ENCODE measurements at regions of chr3 and their contacts with region 1.

Region 1: DNA sequence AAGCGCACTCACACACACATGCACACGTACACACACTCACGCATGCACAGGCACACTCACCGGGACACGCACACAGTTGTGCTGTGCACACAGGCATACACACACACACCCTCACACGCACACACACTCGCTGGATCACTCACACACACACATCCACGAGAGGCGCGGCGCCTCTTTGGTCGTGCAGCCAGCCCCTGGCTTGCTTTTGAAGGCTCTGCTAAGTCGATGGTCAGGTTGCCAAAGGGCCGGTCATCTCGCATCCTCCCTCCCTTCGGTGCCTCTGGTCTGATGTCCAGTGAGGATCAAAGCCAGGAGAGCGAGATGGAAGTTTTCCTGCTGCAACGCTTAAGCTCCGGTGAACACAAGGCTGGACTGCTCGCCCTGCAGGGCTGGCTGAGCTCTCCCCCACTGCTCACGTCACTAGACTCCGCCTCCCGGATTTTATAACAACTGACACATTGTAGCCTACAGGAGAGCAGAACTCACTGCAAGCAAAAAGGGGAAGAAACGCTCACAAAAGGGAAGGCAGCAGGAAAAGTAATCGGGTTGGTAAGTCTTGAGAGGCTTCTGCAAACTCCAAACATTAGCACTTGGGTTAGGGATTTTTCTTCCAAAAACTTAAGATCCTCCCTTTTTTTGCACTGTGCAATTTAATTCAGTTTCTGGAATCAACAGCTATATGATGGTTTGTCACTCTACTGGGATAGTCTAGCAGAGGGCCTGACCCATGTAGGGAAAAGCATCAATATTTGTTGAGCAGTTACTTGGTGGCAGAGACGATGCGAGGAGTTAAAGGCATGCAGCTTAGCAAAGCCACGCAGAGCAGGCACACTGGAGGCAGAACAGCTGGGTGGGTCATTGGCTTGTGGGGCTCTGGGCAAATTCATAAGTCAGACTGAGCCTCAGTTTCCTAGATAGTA is at the start of gene SRGAP3:
- DNase-seq: peak; percentile 63 to 96 (median 92)
- H3K4me3 ChIP-seq: peak within 1 kb of the TSS; percentile 48 to 91 (median 77)
- H3K27ac ChIP-seq: peak within 1 kb of the TSS; percentile 15 to 92 (median 81)
- H3K27me3 ChIP-seq: no peaks in the 10 kb centered on the region
- CTCF ChIP-seq: peak in 49 of 56 donors; percentile 20 to 66 (median 47)
- total RNA-seq, gene SRGAP3: 93.9 to 187 (median 139) TPM

Region 2: GRCh38 chr3:8987645-8988383 is 261.7 kb before region 1 on chr3:
- intact Hi-C with region 1: loop called in 1 of 2 experiments (anchors 5 kb)
- DNase-seq: peak in 9 of 10 donors; percentile 61 to 83 (median 74)
- H3K4me3 ChIP-seq: no peak overlapping the region
- H3K27ac ChIP-seq: peak overlapping the region in 13 of 59 donors; percentile 6 to 69 (median 31)
- H3K27me3 ChIP-seq: no peaks in the 10 kb centered on the region
- CTCF ChIP-seq: peak; percentile 47 to 91 (median 83)

Region 3: DNA sequence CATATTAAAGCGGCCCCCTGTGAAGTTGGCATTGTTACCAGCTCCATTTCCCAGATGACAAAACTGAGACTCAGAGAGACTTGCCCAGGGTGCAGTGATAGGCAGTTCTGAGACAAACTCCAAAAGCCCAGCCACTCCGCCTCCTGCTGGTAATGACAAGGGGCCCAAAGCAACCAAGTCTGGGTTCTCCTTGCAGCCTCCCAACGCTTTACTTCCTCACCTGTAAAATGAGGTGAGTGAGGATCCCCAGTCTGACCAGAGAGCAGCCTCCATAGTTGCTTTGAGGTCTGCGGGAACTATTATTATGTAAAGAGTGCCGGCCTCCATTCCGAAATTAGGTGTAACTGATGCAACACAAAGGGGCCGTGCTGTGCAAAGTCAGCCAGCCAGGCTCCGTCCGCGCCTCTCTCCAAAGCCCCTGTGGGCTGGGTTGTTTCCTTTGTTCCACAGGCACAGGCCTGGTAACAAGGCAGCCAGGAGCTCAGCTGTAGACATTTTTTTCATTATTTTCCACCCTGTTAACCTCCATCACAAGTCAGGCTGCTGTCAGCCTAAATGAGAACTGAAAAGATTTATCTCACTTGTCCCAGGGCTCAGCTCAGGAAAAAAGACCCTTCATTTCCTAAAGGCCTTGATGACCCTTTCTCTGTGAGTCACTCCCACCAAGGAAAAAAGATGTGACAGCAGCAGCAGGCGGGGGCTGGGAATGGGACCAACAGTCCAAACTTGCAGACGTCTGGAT is 147.1 kb before region 1 on chr3:
- intact Hi-C with region 1: loop called in 1 of 2 experiments (anchors 5 kb)
- DNase-seq: no peak
- H3K4me3 ChIP-seq: no peak overlapping the region
- H3K27ac ChIP-seq: peak overlapping the region in 21 of 59 donors; percentile 1 to 89 (median 54)
- H3K27me3 ChIP-seq: no peaks in the 10 kb centered on the region
- CTCF ChIP-seq: no peak

Region 4: GRCh38 chr3:9172851-9173321 is 76.6 kb before region 1 on chr3:
- intact Hi-C with region 1: loop called (anchors 5 kb)
- DNase-seq: peak in 5 of 10 donors; percentile 33 to 59 (median 58)
- H3K4me3 ChIP-seq: peak overlapping the region in 33 of 59 donors; percentile 2 to 48 (median 13)
- H3K27ac ChIP-seq: peak overlapping the region in 55 of 59 donors; percentile 1 to 84 (median 66)
- H3K27me3 ChIP-seq: no peaks in the 10 kb centered on the region
- CTCF ChIP-seq: peak in 34 of 56 donors; percentile 6 to 59 (median 31)

Region 5: GRCh38 chr3:9183811-9184460 is 65.6 kb before region 1 on chr3:
- intact Hi-C with region 1: no loop called
- DNase-seq: peak in 8 of 10 donors; percentile 58 to 77 (median 68)
- H3K4me3 ChIP-seq: peak overlapping the region in 35 of 59 donors; percentile 0 to 45 (median 28)
- H3K27ac ChIP-seq: peak overlapping the region in 53 of 59 donors; percentile 2 to 92 (median 71)
- H3K27me3 ChIP-seq: no peaks in the 10 kb centered on the region
- CTCF ChIP-seq: no peak

Region 6: DNA sequence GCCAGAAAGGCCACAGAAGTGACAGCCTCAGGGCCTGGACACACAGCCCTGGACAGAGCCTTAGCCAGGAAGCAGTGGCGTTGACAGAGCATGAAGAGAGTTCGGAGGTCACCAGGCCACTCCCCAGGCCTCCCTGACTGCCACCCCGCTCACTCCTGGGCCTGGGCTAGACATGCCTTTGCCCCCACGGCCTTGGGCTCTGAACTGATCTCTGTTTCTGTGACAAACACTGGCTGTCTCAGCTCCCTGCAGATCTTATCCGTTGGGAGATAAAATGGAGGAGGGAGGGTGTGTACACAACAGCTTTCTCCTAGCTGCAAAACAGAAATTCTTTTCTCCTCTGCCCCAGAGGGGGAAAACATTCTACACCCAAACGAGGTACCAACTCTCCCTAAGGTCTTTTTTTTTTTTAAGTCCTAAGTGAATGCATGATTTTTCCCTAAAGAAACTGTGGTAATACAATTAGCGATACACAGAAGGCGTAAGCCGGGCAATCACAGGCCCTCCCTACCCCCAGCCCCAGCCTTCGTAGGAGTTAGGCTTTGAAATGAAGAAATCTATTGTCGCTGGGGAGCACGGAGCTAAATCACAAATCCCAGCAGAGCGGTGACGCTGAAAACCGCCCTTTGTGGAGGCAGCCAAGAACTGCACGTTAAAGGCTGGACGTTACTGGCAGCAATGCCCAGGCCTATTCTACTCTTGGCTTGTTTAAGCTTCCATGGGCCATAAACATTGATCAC is 45.1 kb before region 1 on chr3:
- intact Hi-C with region 1: loop called in 1 of 2 experiments (anchors 2 kb)
- DNase-seq: peak; percentile 43 to 78 (median 70)
- H3K4me3 ChIP-seq: peak overlapping the region in 37 of 59 donors; percentile 1 to 44 (median 19)
- H3K27ac ChIP-seq: peak overlapping the region; percentile 66 to 96 (median 91)
- H3K27me3 ChIP-seq: no peaks in the 10 kb centered on the region
- CTCF ChIP-seq: peak in 13 of 56 donors; percentile 8 to 35 (median 18)

Measured in dorsolateral prefrontal cortex (tissue), 120 donors.